Colonic mucosa (tissue), 4 donors: ENCODE measurements at regions of chr13 and their contacts with region 1.

Region 1: DNA sequence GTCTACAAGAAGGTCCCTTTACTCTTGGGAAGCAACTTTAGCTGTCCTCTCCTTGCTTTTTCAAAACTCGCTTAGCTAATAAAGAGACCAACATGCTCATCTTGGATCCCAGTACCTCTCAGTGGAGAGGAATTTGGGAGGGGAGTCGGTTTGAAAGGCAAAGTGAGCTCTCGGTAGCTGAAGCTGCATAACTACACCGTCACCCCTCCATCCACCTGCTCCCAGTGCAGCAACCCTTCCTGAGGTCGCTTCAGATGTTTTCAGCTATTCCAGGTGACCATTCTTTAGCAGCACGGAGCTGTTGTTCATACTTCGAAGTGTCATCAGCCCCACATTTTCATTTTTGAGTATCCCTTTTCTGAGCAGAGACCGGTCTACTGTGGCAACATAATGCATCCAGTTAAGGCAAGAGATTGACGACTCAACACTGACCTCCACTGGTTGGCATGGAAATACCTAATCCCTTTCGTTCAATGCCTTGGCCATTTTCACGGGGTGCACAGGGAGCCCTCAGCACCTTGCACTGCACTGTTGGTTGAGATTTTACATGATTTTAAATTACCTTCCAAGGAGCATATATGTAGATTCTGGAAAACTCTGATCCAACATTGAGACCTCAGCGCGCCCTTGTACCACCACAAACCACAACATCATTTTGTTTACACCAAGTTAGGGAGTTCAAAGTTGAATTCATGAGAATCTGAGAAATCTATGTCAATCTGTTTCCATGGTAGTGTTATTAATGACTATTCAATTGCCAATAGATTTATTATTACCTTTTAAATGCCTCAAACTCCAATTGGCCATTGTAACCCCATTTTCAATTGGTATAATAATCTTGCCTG is 42.2 kb downstream of the DLEU7 start:
- DNase-seq: peak; percentile 72
- H3K4me3 ChIP-seq: no peak overlapping the region
- H3K27ac ChIP-seq: no peak overlapping the region
- H3K4me1 ChIP-seq: no peaks in the 10 kb centered on the region
- H3K27me3 ChIP-seq: no peaks in the 10 kb centered on the region
- CTCF ChIP-seq: peak; percentile 63

Region 2: DNA sequence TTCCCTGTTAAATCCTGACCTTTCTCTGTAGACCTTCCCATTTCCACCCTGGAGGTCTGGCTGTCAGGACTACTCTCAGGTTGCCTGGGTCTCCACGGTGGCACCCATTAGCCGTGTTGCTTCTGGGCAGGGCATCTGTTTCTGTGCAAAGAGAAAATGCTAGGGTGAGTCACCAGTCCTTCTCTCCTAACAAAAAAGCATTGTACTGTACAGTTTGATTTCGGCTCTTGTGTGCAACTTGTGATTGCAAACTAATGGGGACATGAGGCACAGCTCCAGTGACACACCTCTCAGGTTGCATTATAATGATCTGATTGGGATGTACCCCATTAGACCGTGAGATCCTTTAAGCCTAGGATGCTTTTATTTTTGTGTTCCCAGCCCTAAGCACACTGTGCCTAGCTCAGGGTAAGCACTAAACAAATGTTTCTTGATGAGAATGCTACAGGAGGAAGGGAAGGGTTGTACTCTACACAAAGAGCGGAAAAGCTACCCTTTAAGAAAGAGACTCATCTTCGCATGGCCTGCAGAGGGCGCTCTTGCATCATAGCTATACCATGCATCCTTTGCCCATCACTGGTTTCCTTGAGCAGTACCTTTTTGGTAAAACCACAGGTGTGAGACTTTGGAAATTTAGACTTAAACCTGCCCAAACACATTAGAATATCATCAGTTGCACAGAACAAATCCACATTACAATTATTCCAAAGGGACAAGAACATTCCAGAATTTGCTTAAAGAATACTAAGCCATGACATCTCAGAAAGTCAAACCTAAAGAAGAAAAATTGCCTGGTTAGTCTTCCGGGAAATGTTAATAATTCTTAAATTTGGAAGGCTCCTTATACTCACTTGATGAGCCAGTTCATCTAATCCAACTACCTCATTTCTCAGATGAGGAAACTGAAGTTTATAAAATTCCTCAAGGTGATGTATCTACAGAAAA is 824.7 kb before region 1 on chr13:
- intact Hi-C with region 1: loop called (anchors 5 kb)
- DNase-seq: peak; percentile 79
- H3K4me3 ChIP-seq: no peak overlapping the region
- H3K27ac ChIP-seq: no peak overlapping the region
- H3K4me1 ChIP-seq: no peaks in the 10 kb centered on the region
- H3K27me3 ChIP-seq: no peaks in the 10 kb centered on the region
- CTCF ChIP-seq: peak; percentile 84

Region 3: GRCh38 chr13:50094615-50095293 is 706.6 kb before region 1 on chr13:
- intact Hi-C with region 1: loop called (anchors 10 kb)
- DNase-seq: no peak
- H3K4me3 ChIP-seq: no peak overlapping the region
- H3K27ac ChIP-seq: no peak overlapping the region
- H3K4me1 ChIP-seq: no peaks in the 10 kb centered on the region
- H3K27me3 ChIP-seq: no peaks in the 10 kb centered on the region
- CTCF ChIP-seq: no peak

Region 4: GRCh38 chr13:50911937-50912795 is 110.9 kb after region 1 on chr13:
- intact Hi-C with region 1: loop called (anchors 10 kb)
- DNase-seq: peak; percentile 96
- H3K4me3 ChIP-seq: no peak overlapping the region
- H3K27ac ChIP-seq: peak overlapping the region; percentile 86
- H3K4me1 ChIP-seq: no peaks in the 10 kb centered on the region
- H3K27me3 ChIP-seq: no peaks in the 10 kb centered on the region
- CTCF ChIP-seq: peak; percentile 69

Region 5: DNA sequence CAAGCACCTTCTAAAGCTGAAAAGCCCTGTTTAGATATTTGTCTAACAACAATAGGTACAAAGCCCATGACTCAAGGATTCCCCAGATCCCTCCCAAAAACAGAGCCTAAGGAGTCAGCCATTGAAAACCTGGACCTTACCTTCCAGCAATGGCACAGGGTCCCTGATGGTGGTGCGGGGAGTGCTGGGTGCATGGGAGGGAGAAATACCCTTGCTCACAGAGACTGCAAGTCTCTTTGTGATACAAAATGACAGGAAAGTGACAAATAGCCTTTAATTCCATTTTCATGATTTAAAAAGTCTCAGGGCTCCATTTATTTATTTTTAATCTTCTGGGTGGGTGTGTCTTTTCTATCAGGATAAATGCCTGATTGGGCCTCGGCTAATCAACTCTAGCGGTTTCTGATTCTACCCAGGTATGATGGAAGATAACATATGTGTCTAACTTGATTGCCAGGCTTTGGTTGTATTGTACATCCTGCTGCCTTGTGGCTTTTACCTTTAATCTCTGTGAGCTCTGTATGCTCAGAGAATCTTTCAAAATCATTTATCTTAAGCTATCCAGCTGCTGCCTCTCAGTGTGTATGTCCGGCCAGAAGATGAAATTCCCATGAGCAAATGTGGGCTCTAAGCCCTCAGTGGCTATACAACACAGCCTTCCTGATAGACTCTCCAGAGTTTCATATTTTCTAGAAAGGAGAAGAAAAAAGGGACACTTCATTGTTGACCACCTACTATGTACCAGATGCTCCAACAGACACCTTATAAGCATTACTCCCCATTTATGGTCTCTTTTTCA is 366.3 kb after region 1 on chr13:
- intact Hi-C with region 1: no loop called
- DNase-seq: no peak
- H3K4me3 ChIP-seq: no peak overlapping the region
- H3K27ac ChIP-seq: no peak overlapping the region
- H3K4me1 ChIP-seq: no peaks in the 10 kb centered on the region
- H3K27me3 ChIP-seq: no peaks in the 10 kb centered on the region
- CTCF ChIP-seq: no peak

Region 6: DNA sequence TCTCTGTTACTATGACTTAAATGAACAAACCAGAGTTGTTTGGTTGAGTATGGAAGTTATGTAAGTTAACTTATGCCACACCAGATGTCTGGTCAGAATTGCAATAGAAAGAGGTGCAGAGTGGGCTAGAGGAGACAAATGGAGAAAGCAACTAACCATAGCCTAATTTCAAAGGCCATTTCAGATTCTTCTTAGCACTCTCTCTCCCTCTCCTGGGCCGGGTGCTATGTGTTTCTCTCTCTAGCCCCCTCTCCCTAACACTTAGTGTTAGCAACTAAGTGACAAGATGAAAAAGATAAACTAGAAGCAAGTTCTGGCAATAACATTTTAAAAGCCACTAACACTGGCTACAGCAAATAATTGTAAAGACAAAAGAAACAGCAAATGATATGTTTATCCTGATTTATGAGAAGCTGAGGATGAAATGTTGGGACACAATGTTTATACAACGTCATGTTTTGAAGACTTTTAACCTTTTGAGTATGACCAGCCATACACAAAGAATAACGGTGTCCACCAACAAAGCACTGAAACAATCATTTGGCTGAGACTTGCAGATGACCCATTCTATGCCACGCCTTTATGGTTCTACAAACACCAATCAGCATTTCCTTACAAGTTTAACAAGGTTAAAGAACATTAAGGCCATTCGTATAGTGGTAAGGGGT is 556.8 kb after region 1 on chr13:
- intact Hi-C with region 1: no loop called
- DNase-seq: no peak
- H3K4me3 ChIP-seq: no peak overlapping the region
- H3K27ac ChIP-seq: no peak overlapping the region
- H3K4me1 ChIP-seq: no peaks in the 10 kb centered on the region
- H3K27me3 ChIP-seq: no peaks in the 10 kb centered on the region
- CTCF ChIP-seq: no peak